Pancreas (tissue), 10 donors: ENCODE measurements at regions of chr11 and their contacts with region 1.

Region 1: DNA sequence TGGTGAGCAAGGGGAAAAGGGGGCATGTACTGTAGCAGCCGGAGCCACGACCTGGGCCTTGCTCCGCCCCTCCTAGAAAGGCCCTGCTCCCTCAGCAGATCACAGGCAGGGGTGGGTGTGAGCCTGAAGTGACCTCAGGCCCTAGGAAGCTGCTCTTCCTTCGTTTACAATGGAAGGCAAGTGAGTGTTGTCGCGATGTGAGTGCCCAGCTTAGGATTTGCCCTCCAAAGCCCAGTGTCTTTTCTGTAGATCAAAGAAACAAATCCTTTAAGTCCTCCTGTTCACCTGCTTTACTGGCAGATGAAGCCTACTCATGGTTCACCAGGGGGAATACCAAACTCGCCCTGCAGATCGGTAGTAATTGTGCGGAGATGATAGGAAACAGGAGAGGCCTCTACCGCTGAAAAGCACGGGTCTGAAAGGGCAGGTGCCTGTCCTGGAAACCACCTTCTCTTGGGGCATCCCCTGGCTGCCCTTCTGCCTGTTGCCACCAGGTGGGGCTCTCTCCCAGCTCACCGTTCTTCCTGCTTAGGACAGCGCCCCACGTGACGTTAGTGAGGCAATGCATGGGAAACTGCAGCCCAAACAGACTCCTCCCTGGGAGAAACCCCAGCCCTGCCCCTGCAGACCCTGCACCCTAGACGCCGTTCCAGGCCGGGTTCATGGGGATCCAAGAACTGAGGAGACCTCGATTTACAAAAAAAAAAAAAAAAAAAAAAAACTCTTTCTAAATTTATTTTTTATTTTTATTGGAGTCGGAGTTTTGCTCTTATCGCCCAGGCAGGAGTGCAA is 45.9 kb upstream of the RAB1B start:
- DNase-seq: peak; percentile 83 to 94 (median 89)
- ATAC-seq: peak; percentile 93 to 99 (median 98)
- H3K4me3 ChIP-seq: no peak overlapping the region
- H3K27ac ChIP-seq: peak overlapping the region in 2 of 4 donors; percentile 51 to 70
- H3K4me1 ChIP-seq: no peaks in the 10 kb centered on the region
- H3K27me3 ChIP-seq: no peaks in the 10 kb centered on the region
- CTCF ChIP-seq: peak; percentile 97 to 99 (median 98)

Region 2: DNA sequence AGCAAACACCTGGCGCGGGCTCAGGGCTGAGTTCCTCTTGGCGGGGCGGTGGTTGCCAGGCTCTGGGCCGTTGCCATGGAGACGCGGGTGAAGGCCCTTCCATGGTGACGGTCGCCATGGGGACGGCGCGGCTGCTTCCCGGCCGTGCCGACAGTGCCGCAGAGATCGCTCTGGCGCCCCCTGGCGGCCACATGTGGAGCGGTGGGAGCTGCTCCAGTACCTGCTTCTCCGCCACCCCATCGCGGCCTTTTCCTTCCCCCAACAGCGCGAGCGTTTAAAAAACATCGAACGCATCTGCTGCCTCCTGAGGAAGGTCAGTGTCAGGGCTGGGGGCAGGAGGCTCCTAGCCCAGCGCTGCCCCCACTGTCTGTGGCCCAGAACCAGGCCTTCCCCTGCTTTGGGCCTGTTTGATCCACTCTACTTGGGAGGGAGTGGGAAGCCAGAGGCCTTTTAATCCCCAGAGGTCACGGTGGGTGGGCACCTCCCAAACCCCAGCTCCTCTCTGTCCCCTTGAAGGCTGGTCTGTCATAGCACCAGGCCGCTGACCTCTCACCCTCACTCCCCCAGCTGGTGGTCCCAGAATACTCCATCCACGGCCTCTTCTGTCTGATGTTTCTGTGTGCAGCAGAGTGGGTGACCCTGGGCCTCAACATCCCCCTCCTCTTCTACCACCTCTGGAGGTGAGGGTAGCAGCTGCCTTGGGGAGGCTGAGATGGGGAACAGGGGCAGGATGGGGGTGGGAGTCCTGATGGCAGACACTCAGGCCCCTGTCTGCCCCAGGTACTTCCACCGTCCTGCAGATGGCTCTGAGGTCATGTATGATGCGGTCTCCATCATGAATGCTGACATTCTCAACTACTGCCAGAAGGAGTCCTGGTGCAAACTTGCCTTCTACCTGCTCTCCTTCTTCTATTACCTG is 60.2 kb after region 1 on chr11:
- intact Hi-C with region 1: loop called in 1 of 3 experiments (anchors 10 kb)
- DNase-seq: peak; percentile 98 to 100 (median 100)
- ATAC-seq: peak; percentile 85 to 94 (median 89)
- H3K4me3 ChIP-seq: no peak overlapping the region
- H3K27ac ChIP-seq: no peak overlapping the region
- H3K4me1 ChIP-seq: peaks cover 0 to 6% (median under 1%) of the 10 kb centered on the region in 3 donors
- H3K27me3 ChIP-seq: no peaks in the 10 kb centered on the region
- CTCF ChIP-seq: peak; percentile 98 to 100 (median 99)